ENCODE measurements at regions of chr4 and their contacts with region 1.

Region 1: DNA sequence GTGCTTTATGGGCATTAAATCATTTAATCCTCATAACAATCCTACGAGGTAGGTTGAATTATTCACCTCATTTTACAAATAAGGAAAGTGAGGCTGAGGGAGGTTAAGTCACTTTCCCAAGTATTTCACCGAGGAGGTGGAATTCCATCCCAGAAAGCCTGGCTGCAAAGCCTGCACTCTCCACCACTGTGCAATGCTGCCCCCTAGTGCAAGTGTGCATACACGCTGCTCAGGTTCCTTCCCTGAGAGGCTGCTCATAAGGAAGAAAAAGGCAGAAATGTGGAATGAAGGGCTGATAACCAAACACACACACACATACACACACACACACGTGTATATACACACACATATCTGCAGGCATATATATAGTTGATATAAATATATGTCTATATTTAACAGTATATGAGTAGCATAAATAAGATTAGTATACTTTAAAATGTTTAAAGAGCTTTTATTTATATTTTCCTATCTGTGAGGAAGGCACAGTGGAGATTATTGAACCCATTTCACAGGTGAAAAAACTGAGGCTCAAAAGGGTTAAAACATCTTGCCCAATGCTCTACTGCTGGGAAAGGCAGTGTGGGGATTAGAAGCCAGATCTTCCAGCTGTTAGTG is 714.5 kb upstream of the TENM3 start:
- DNase-seq: peak; percentile 85
- ATAC-seq: peak; percentile 77

Region 2: DNA sequence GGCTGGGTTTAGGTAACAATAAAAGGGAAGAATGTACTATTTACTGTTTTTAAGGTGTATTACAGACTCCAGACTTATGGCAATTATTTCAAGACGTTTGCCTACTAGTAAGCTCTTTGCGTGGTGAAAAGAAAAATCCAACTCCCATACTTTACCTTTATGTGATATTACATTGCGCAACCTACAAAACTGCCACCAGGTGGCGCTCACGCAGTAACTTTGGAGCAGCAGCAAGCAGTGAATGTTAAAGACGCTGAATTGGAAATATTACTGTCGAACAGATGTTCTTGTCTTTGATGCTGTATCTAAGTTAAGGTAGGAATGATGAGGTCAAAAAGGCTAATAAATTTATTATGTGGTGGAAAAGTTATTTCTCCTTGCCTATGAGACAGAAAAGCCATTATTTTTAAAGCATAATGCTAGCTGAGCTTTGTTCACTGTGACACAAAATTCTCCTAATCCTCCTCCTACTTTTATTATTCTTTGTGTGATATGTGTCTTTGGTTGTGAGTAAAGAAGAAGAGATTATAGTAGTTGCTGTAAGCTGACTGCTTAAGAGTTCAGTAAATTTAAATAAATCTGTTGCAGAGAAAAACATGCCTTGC is 385.3 kb before region 1 on chr4:
- intact Hi-C with region 1: loop called (anchors 5 kb)
- DNase-seq: peak; percentile 90
- ATAC-seq: peak; percentile 74

Measured in sciatic nerve (tissue), 2 donors.